Activated T-helper 1 cell treated with anti-CD3 and anti-CD28 coated beads, Interleukin-12 subunit alpha, Interleukin-12 subunit beta, Interleukin-2, Interleukin-4 antibody, amounts not matched to agents 30 ng/mL and 10 ng/mL and 1 ng/mL, durations not matched to agents 14 hours and 24 hours and 36 hours (primary cell): ENCODE measurements at regions of chr17 and their contacts with region 1.

Region 1: GRCh38 chr17:28057731-28058279 is 15.3 kb downstream of the NLK start:
- DNase-seq: no peak
- H3K4me3 Mint-ChIP-seq: no peak overlapping the region
- H3K27ac Mint-ChIP-seq: peak overlapping the region; percentile 85
- H3K4me1 Mint-ChIP-seq: peaks cover 35% of the 10 kb centered on the region
- H3K27me3 Mint-ChIP-seq: no peaks in the 10 kb centered on the region

Region 2: GRCh38 chr17:28071891-28072606 is 14.2 kb after region 1 on chr17:
- intact Hi-C with region 1: loop called (anchors 2 kb)
- DNase-seq: no peak
- H3K4me3 Mint-ChIP-seq: peak overlapping the region; percentile 1
- H3K27ac Mint-ChIP-seq: peak overlapping the region; percentile 18
- H3K4me1 Mint-ChIP-seq: peaks cover 34% of the 10 kb centered on the region
- H3K27me3 Mint-ChIP-seq: no peaks in the 10 kb centered on the region

Region 3: GRCh38 chr17:28295677-28296578 is 238.1 kb after region 1 on chr17:
- intact Hi-C with region 1: loop called (anchors 5 kb)
- DNase-seq: no peak
- H3K4me3 Mint-ChIP-seq: no peak overlapping the region
- H3K27ac Mint-ChIP-seq: peak overlapping the region; percentile 85
- H3K4me1 Mint-ChIP-seq: peaks cover 15% of the 10 kb centered on the region
- H3K27me3 Mint-ChIP-seq: peaks cover 23% of the 10 kb centered on the region

Region 4: DNA sequence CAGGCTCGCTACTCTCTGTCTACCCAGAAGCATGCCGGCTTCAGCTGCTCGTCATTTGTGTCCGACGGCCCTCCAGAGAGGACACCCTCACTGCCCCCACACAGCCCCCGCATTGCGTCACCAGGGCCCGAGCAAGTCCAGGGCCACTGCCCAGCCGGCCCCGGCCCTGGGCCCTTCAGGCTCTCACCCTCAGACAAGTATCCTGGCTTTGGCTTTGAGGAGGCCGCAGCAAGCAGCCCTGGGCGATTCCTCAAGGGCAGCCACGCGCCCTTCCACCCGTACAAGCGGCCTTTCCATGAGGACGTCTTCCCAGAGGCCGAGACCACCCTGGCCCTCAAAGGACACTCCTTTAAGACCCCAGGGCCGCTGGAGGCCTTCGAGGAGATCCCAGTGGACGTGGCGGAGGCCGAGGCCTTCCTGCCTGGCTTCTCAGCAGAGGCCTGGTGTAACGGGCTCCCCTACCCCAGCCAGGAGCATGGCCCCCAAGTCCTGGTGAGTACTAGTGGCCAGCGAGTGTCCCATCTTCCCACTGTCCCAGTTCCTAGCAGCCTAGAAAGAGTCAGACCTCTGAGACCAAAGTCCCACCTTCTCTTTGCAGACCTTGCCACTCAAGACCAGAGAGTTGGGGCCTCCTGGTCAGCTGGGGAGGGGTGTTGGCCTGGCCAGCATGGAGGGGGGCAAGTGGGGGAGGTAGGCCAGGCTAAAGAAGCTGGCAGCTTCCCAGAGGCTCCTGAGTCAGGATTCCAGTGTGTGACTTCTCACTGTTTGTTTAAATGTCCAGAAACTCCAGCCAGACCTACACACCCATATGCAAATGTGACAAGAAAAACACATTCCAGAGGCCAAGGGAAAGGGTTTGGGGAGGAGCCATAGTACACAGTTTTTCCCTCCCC is 466.9 kb after region 1 on chr17:
- intact Hi-C with region 1: no loop called
- DNase-seq: no peak
- H3K4me3 Mint-ChIP-seq: no peak overlapping the region
- H3K27ac Mint-ChIP-seq: no peak overlapping the region
- H3K4me1 Mint-ChIP-seq: no peaks in the 10 kb centered on the region
- H3K27me3 Mint-ChIP-seq: no peaks in the 10 kb centered on the region